Posterior vena cava (tissue), 2 donors: ENCODE measurements at regions of chr1 and their contacts with region 1.

Region 1: DNA sequence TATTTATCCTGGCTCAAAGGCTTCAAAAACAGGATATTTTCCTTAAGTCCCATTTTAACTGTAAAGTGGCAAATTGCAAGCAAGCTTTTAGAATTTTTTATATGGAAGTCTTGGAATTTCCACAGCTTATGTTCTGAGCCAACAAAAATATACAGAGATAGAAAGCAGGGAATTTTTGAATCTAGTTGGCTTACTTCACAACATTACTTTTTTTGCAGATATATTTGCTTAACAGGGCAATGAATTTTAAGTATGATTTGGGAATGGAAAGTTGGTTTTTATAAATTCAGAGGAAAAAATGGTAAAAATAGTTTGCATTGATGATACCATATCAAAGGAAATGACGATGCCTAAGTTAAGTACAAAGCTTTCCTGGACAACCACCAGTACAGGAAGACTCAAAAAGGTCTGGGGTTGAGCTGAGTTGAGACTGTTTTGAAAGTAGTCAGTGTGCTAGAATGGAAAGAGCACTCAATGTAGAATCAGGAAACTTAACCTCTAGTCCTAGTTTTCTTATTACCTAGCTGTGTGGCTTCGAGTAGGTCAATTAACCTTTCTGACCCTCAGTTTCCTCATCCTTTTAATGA is 11.0 kb upstream of the VCAM1 start:
- DNase-seq: no peak

Region 2: GRCh38 chr1:100219883-100220282 is 488.7 kb before region 1 on chr1:
- intact Hi-C with region 1: no loop called
- DNase-seq: no peak

Region 3: DNA sequence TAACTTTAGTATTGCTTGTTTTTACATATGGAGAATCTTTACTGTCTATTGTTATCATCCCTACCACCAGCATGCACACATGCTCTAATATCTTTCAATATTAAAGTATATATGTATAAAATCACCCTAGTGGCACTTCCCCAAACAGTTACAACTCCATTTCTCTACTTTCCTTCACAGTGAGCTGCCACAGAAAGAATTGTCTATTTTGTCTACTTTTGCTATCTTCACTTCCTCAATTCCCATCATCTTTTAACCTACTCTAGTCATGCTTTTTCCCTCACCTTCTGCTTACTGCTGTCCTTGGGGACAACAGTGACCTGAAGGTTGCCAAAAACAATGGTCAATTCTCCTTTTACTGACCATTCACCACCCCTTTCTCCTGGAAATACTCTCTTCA is 70.2 kb after region 1 on chr1:
- intact Hi-C with region 1: loop called in 1 of 2 experiments (anchors 5 kb)
- DNase-seq: no peak

Region 4: GRCh38 chr1:101002551-101002950 is 294.0 kb after region 1 on chr1:
- intact Hi-C with region 1: no loop called
- DNase-seq: no peak

Region 5: DNA sequence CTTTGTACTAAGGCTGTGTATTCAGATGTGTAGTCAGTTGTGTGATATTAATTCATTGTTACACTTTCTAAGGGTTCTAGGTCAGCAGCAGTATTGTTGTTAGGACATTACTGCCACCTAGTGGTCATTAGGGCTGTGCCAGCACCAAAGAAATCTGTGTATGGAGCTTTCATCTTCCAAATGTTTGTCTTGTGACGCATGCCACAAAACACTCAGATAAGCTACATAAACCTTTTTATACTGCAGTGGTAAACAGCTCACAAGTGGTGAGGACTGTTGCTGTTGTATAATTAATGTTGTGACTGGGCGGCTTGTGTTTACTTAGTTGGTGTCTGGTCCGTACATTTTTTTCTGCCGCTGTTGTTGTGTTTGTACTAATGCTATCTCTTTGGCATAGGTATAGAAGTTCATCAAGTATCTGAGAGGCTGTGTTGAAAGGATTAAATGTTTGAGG is 579.9 kb after region 1 on chr1:
- intact Hi-C with region 1: no loop called
- DNase-seq: no peak